Dendritic cell treated with granulocyte-macrophage colony-stimulating factor and Interleukin-4, amounts not matched to agents 40 ng/mL and 50 ng/mL, for 4 days (primary cell): ENCODE measurements at regions of chr11 and their contacts with region 1.

Region 1: DNA sequence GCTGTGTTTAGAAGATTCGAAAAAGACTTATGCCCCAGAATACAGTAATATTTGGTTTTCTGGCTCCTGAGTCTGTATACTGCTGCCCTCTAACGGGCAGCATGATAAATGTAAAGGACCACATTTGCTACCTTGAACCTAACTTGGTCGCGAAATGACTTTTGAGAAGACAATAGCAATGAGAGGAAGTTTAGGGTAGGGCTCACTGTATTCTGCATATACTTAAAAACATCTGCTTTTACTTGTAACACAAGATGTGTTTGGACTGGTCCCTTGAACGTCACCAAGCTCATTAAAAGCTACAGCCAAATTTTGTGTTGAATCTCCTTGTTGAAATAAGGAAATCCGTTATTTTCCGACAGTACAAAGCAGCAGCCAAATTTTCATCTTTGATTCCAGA is 309.1 kb downstream of the SWAP70 start:
- H3K4me3 Mint-ChIP-seq: no peak overlapping the region
- H3K27ac Mint-ChIP-seq: no peak overlapping the region
- H3K4me1 Mint-ChIP-seq: no peaks in the 10 kb centered on the region
- H3K27me3 Mint-ChIP-seq: no peaks in the 10 kb centered on the region

Region 2: DNA sequence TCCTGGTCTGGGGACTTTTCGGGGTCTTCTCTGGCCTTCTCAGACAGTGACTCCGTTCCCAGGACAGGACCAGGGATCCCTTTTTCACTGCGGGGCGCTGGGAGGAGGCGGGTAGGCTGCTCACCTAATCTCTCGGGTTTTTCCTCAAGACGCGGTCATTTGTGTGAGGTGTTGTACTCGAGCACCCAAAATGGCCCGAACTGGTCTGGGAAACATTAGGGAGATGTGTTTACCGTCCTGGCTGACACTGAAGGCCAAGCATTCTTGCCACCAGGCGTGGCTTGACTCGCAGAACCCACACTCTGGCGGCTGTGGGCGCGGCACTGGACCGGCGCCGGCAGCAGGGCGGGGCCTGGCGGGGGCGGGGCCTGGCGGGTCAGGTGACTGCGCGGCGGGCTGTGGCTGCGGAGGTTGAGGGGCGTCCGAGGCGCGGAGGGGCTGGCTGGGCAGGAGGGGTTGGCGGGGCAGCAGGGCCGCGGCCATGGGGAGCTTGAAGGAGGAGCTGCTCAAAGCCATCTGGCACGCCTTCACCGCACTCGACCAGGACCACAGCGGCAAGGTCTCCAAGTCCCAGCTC is 309.2 kb before region 1 on chr11 and contains the start of gene SWAP70:
- intact Hi-C with region 1: no loop called
- H3K4me3 Mint-ChIP-seq: peak within 1 kb of the TSS; percentile 99
- H3K27ac Mint-ChIP-seq: peak within 1 kb of the TSS; percentile 94
- H3K4me1 Mint-ChIP-seq: peaks cover 70% of the 10 kb centered on the region
- H3K27me3 Mint-ChIP-seq: no peaks in the 10 kb centered on the region

Region 3: GRCh38 chr11:9757809-9758636 is 215.0 kb before region 1 on chr11:
- intact Hi-C with region 1: loop called (anchors 2 kb)
- H3K4me3 Mint-ChIP-seq: peak overlapping the region; percentile 75
- H3K27ac Mint-ChIP-seq: peak overlapping the region; percentile 62
- H3K4me1 Mint-ChIP-seq: peaks cover 40% of the 10 kb centered on the region
- H3K27me3 Mint-ChIP-seq: peaks cover 3% of the 10 kb centered on the region

Region 4: DNA sequence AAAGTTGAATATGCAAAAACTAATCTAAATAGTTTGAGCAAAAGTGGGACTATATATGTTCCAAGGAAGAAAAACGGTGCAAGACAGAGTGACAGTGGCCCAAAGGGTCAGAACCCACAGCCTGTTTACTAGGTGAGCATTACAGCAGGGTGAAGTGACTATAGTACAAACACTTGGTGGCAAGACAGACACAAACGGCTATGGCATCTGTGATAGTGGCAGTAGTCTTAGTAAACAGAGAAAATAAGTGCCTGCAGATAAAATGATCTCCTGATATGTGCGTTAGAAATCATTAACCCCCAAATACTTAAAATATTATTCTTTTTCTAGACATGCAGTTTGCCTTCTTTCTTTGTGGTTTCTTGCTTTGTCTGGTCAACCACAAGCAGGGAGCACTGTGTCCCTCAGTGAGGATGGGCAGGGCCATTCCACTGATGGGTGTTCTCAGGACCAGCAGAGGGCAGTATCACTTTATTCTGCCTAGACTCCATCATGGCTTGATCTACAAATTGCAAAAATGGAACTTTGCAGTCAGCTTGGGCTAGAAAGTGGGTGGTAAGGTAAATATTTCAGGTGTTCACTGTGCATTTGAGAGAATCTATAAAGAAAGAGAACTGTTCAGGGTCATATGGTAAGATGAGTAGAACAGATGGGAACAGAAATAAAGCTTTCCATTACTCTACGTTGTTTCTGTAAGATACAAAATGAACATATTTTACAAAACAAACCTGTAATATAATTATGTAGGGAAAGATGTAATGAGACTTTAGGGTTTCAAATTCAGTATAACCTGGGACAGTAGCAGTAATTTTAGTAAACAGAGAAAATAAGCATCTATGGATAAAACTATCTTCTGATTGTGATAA is 110.9 kb before region 1 on chr11:
- intact Hi-C with region 1: loop called (anchors 5 kb)
- H3K4me3 Mint-ChIP-seq: no peak overlapping the region
- H3K27ac Mint-ChIP-seq: no peak overlapping the region
- H3K4me1 Mint-ChIP-seq: no peaks in the 10 kb centered on the region
- H3K27me3 Mint-ChIP-seq: no peaks in the 10 kb centered on the region

Region 5: GRCh38 chr11:10208131-10208575 is 235.2 kb after region 1 on chr11:
- intact Hi-C with region 1: no loop called
- H3K4me3 Mint-ChIP-seq: no peak overlapping the region
- H3K27ac Mint-ChIP-seq: no peak overlapping the region
- H3K4me1 Mint-ChIP-seq: peaks cover 10% of the 10 kb centered on the region
- H3K27me3 Mint-ChIP-seq: no peaks in the 10 kb centered on the region